ENCODE measurements at regions of chr11 and their contacts with region 1.

Region 1: GRCh38 chr11:13354335-13354734 is 76.7 kb downstream of the BMAL1 start:
- DNase-seq: no peak
- H3K4me3 ChIP-seq: no peak overlapping the region
- H3K27ac ChIP-seq: no peak overlapping the region
- H3K4me1 ChIP-seq: no peaks in the 10 kb centered on the region
- H3K27me3 ChIP-seq: no peaks in the 10 kb centered on the region
- CTCF ChIP-seq: no peak
- EP300 ChIP-seq: no peak
- POLR2A ChIP-seq: no peak

Region 2: DNA sequence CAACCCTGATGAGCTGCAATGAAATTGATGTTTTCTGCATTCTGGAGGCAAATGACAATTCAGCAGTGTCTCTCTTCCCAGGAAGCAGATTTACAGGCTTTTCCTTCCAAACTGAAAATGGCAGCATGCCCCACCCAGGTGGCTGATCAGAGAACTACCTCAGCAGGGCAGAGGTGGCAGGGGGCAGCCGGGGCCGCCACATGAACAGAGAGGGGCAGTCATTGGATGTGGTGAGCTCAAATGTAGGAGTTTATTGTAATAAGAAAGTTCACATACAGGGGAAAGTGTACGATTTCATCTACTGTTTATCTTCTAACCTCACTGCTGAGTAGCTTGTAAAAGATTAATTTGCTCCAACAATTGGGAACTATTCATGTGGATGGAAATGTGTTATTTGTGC is 992.7 kb before region 1 on chr11:
- intact Hi-C with region 1: loop called (anchors 10 kb)
- DNase-seq: no peak
- H3K4me3 ChIP-seq: no peak overlapping the region
- H3K27ac ChIP-seq: peak overlapping the region in 3 of 4 donors; percentile 57 to 71 (median 67)
- H3K4me1 ChIP-seq: peaks cover 0 to 36% (median 27%) of the 10 kb centered on the region in 4 donors
- H3K27me3 ChIP-seq: no peaks in the 10 kb centered on the region
- CTCF ChIP-seq: no peak
- EP300 ChIP-seq: no peak
- POLR2A ChIP-seq: no peak

Region 3: GRCh38 chr11:13384908-13385640 is 30.7 kb after region 1 on chr11:
- intact Hi-C with region 1: no loop called
- DNase-seq: no peak
- H3K4me3 ChIP-seq: no peak overlapping the region
- H3K27ac ChIP-seq: peak overlapping the region in 2 of 4 donors; percentile 22
- H3K4me1 ChIP-seq: peaks cover 0 to 17% (median 0%) of the 10 kb centered on the region in 4 donors
- H3K27me3 ChIP-seq: no peaks in the 10 kb centered on the region
- CTCF ChIP-seq: peak in 3 of 4 experiments; percentile 12 to 45 (median 44)
- EP300 ChIP-seq: no peak
- POLR2A ChIP-seq: no peak

Region 4: DNA sequence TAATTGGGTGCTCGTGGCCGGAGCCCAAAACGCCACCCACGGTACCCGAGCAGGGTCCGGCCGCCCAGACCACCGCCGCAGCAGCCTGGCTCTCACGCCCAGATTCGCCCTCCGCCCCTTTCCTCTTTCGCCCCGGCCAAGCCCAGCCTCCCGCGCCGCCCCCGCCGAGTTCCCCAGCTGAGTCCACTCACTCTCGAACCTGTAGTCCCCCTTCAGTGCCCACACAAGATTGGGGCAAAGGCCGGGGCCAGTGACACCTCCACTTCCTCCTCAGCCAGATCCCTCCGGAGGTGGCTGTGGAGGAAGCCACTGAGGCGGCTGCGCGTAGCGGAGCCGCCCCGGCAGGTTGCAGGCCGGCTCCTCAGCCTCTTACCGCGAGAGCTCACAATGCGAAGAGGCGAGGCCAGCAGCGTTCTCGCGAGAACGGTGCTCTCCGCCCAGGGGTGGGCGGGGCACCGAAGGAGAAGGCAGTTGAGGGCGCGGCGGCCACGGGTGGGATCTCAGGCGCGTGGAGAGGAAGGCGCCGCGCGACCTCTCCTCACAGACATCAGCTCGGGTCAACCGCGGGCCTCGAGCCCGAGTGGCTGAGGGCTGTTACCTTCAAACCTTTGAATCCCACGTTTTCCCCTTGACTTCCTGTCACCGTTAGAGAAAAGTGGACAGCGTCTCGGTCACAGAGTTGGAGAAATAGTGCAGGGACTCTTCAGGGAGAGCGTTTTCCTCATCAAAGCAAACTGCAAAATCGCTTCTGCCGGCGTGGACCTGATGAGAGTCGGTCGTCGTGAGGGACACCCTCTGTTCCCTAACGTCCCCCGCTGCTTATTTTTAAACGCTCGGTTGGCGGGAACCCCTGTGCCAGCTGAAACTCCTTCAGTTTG is 108.8 kb after region 1 on chr11 and contains the start of gene BTBD10:
- intact Hi-C with region 1: no loop called
- DNase-seq: peak; percentile 96
- H3K4me3 ChIP-seq: peak within 1 kb of the TSS; percentile 74 to 92 (median 78)
- H3K27ac ChIP-seq: peak within 1 kb of the TSS; percentile 85 to 92 (median 92)
- H3K4me1 ChIP-seq: peaks cover 0 to 21% (median 14%) of the 10 kb centered on the region in 4 donors
- H3K27me3 ChIP-seq: no peaks in the 10 kb centered on the region
- CTCF ChIP-seq: no peak
- EP300 ChIP-seq: no peak
- POLR2A ChIP-seq: peak; percentile 74 to 86
- total RNA-seq, gene BTBD10: 43.3 to 77.8 (median 61.2) TPM